ENCODE measurements at regions of chr4 and their contacts with region 1.

Region 1: DNA sequence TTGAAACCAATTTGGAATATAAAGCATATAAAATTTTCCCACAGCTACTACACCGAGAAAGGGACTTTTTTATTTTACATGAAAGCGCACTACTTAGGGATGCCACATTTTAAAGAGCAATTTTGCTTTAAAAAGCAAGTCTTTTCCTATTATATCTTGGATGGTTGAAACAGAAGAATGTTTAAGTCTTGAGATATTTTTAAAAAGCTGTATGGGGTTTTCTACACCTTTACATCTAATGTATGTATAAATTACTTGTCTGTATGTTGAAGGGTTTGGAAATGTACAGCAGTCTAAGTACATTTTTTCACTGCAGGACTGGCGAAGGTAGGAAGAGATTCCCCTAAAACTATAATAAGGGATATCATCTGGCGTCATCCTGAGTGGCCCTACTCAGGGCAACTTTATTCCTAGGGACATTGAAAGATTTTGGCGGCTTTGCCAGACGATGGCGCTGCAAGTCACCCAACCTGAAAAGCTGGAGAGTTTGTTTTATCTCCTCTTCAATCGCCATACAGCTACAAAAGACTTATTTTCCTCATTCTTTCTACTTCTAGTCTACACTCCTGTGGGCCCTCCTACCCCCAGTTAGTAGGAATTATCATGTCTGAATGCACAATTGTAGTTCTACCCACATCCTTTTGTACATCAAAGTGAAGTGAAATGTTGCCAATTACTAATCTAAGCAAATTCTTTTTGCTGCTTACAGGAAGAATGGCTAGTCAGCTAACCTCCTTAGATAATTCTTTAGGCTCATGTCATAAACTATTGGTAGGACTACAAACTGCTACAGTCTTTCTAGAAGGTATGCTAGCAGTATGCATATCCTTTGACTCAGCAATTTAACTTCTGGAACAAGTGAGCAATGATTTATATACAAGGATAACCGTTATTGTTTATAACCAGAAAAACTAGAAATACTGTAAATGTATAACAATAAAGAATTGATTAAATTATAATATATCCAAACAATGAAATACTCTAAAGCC is 782 bp upstream of the NEK1 start:
- DNase-seq: peak; percentile 66
- H3K4me3 Mint-ChIP-seq: peak overlapping the region; percentile 96
- H3K27ac Mint-ChIP-seq: peak overlapping the region; percentile 98
- H3K4me1 Mint-ChIP-seq: peaks cover 50% of the 10 kb centered on the region
- H3K27me3 Mint-ChIP-seq: no peaks in the 10 kb centered on the region

Region 2: GRCh38 chr4:169757575-169758184 is 144.5 kb after region 1 on chr4 and contains the start of gene HPF1:
- intact Hi-C with region 1: loop called (anchors 1 kb)
- DNase-seq: peak; percentile 90
- H3K4me3 Mint-ChIP-seq: peak within 1 kb of the TSS; percentile 91
- H3K27ac Mint-ChIP-seq: peak within 1 kb of the TSS; percentile 67
- H3K4me1 Mint-ChIP-seq: peaks cover 27% of the 10 kb centered on the region
- H3K27me3 Mint-ChIP-seq: peaks cover 11% of the 10 kb centered on the region
- total RNA-seq, gene HPF1: 23.6 and 24.1 TPM in 2 replicates

Region 3: GRCh38 chr4:169810325-169811323 is 197.5 kb after region 1 on chr4:
- intact Hi-C with region 1: loop called (anchors 2 kb)
- DNase-seq: no peak
- H3K4me3 Mint-ChIP-seq: no peak overlapping the region
- H3K27ac Mint-ChIP-seq: no peak overlapping the region
- H3K4me1 Mint-ChIP-seq: peaks cover 2% of the 10 kb centered on the region
- H3K27me3 Mint-ChIP-seq: peaks cover 2% of the 10 kb centered on the region

Region 4: DNA sequence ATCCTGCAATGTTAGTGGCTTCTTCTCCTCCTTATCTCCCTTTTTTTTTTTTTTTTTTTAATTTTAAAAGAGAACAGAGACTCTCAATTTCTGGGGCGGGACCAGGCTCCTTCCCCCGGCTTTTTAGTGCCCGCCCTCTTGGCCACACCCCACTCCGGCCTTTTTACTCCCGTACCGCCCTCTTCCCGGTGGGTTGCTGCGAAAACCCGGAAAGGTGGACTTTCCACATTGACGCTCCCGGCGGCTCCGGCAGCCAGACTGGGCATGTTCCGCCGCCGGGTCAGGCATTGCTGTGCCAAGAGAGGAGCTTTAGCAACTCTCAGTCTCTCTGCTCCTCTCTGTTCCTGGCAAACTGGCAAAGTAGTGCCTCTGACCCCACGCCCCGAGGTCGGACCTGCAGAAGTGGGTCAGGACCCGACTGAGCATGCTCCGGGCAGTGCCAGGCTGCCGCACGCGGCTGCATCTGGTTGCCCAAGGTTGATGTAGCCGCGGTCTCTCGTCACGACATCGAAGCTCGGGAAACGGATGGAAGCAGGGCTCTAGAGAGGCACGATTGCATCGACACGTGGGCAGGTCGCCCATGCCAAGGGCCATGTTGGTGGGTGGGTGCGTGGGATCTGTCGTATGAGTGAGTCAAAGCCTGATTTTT is 414.1 kb after region 1 on chr4:
- intact Hi-C with region 1: loop called (anchors 1 kb)
- DNase-seq: peak; percentile 83
- H3K4me3 Mint-ChIP-seq: peak overlapping the region; percentile 79
- H3K27ac Mint-ChIP-seq: peak overlapping the region; percentile 63
- H3K4me1 Mint-ChIP-seq: peaks cover 7% of the 10 kb centered on the region
- H3K27me3 Mint-ChIP-seq: peaks cover 51% of the 10 kb centered on the region

Region 5: DNA sequence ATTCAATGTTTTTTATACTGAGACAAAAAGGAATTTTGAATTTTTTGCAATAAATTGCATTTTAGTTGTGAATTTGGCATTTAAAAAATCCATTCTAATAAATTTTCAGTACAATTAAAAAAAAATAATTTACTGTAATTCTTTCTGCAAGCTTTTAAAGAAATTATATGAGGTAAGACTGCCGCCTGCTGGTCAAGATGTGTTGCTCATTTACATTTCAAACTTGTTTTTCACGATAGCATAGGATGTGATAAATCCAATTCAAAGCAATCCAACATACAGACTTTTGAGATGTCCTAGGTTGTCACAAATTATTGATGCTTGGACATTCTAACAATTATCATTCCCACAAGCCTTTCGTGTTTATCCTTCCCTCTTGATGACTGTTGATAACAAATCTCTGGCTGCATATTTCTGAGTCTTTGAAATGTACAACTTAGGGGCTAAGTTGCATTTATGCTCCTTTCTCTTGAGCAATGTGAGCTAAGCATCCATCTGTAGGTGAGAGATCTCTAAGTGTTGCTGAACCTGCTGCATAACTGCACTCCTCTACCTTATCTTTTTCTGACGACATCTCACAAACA is 434.7 kb after region 1 on chr4:
- intact Hi-C with region 1: loop called (anchors 2 kb)
- DNase-seq: no peak
- H3K4me3 Mint-ChIP-seq: no peak overlapping the region
- H3K27ac Mint-ChIP-seq: no peak overlapping the region
- H3K4me1 Mint-ChIP-seq: no peaks in the 10 kb centered on the region
- H3K27me3 Mint-ChIP-seq: no peaks in the 10 kb centered on the region